ENCODE measurements at regions of chr14 and their contacts with region 1.

Region 1: GRCh38 chr14:61252369-61253063 is 28.6 kb downstream of the TMEM30B start:
- DNase-seq: peak; percentile 87
- H3K4me3 ChIP-seq: no peak overlapping the region
- H3K27ac ChIP-seq: peak overlapping the region in 1 of 2 donors; percentile 6
- H3K4me1 ChIP-seq: no peaks in the 10 kb centered on the region
- H3K27me3 ChIP-seq: no peaks in the 10 kb centered on the region
- CTCF ChIP-seq: peak; percentile 63 to 91 (median 84)
- POLR2A ChIP-seq: no peak

Region 2: DNA sequence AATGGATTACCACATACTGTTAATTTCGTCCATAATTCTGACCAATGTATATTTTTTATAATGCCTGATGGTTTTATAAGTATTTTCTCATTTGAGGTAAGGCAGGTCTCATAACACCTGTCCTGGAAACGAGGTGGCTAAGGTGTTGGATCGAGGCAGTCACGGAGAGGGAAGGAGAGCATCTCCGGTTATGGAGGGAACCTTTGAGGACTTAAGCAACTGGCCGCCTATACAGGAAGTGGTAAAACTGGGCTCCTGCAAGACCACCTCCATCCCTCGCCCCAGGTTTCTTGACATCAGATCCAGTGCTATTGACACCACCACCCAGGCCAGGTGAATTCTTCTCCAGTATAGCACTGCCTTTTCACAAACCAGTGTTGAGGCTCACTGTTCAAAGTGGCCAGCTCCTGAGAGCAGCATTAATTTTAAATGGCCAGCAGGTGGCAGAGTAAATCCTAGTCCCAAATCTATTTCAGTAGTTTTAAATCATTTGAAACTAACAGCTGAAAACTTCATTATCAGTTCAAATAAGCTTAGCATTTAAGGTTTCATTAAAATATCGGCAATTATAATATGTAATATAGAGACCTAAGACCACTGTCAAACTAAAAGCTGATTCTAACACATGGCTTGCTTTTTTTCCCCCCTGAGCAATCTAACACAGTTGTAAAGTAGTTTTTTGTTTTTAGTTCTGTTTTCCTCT is 902.7 kb before region 1 on chr14:
- intact Hi-C with region 1: loop called (anchors 10 kb)
- DNase-seq: peak; percentile 62
- H3K4me3 ChIP-seq: no peak overlapping the region
- H3K27ac ChIP-seq: no peak overlapping the region
- H3K4me1 ChIP-seq: no peaks in the 10 kb centered on the region
- H3K27me3 ChIP-seq: no peaks in the 10 kb centered on the region
- CTCF ChIP-seq: peak; percentile 10 to 72 (median 60)
- POLR2A ChIP-seq: no peak

Region 3: DNA sequence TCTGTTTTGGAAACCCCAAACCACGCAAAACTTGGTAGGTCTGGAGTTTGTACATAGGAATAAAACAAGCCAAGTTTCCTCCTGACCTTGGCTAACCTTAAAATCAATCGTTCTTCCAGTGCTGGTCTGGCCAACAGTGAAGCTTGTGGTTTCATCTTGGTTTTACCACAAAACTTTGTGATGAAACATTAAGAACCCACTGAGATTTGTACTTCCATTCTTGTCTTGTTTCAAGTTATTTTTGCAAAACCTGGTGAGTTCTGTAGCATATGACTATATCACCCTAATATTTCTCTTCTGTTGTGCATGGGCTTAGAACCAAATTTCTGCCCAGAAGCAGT is 629.6 kb before region 1 on chr14:
- intact Hi-C with region 1: loop called (anchors 2 kb)
- DNase-seq: no peak
- H3K4me3 ChIP-seq: no peak overlapping the region
- H3K27ac ChIP-seq: peak overlapping the region; percentile 70 to 78
- H3K4me1 ChIP-seq: peaks cover 4% of the 10 kb centered on the region
- H3K27me3 ChIP-seq: no peaks in the 10 kb centered on the region
- CTCF ChIP-seq: no peak
- POLR2A ChIP-seq: no peak

Region 4: GRCh38 chr14:60724137-60724619 is 528.3 kb before region 1 on chr14 and contains the start of gene SIX4:
- intact Hi-C with region 1: loop called (anchors 10 kb)
- DNase-seq: peak; percentile 94
- H3K4me3 ChIP-seq: peak within 1 kb of the TSS; percentile 78 to 88
- H3K27ac ChIP-seq: peak within 1 kb of the TSS; percentile 84 to 94
- H3K4me1 ChIP-seq: no peaks in the 10 kb centered on the region
- H3K27me3 ChIP-seq: no peaks in the 10 kb centered on the region
- CTCF ChIP-seq: no peak
- POLR2A ChIP-seq: peak; percentile 94
- total RNA-seq, gene SIX4: 17.6 to 21.3 TPM

Region 5: DNA sequence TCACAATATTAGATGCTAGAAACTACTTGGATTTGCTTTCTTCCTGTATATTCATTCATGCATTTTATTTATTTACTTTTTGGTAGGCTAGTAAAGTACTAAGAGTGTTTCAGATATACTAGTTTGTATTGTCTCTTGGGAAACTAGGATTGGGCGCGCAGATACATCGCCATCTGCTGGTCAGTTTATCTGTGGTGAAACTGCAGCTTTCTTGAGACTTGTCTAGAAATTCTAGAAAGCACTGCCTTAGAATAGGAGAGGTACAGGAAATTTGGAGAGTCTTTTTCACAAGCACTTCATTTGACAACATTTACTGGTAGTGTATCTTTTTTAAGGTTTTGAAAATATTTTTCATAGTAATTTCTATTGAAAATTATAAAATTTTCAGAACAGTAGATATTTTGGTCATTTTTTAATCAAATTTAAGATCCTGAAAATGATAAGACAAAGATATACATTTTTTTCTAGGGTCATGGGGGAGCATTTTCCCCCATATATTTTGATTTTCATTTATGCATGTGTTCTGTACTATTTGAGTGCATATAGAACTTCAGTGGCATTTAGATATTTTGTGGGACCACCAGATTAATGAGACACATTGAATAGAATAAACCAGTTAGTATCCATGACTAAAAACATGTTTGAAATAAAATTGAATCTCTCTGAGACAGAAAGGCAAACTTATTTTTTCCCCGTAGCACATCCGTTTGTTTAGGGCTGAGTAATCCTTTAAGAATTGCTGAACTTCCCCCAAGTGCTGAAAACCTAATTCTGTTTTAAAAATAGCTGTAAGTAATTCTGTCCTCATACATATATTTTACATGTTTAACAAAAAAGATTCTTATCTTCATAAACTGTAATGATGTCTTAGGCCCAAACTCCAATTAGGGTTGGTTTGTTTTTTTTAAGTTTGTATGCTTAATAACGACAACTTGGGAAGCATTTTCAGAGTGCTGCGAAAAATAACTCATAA is 227.0 kb before region 1 on chr14:
- intact Hi-C with region 1: loop called (anchors 10 kb)
- DNase-seq: peak; percentile 76
- H3K4me3 ChIP-seq: no peak overlapping the region
- H3K27ac ChIP-seq: no peak overlapping the region
- H3K4me1 ChIP-seq: no peaks in the 10 kb centered on the region
- H3K27me3 ChIP-seq: no peaks in the 10 kb centered on the region
- CTCF ChIP-seq: peak; percentile 64 to 85 (median 84)
- POLR2A ChIP-seq: no peak

Measured in prostate gland (tissue), 2 donors.